ENCODE measurements at regions of chr1 and their contacts with region 1.

Region 1: DNA sequence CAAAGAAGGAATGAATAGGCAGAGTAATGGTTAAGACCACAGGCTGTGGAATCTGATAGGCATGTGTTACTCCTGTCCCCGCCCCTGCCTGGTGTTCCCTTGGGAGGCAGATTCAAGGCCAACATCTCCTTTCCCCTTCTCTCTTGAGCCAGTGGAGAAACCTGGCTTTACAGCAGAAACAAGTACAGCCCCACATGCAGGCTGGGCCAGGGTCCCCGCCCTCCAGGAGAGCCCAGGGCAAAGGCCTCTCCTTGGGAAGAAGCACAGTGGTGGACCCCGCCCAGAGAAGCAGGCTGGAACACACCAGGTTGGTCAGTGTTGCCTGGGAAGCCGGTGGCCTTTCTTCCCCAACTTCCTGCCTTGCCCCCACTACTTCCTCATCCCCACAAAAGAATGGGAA is 6.8 kb downstream of the C1orf167 start:
- DNase-seq: no peak
- ATAC-seq: no peak; the same call in 1 of the 2 replicates
- H3K4me3 ChIP-seq: no peak overlapping the region
- H3K27ac ChIP-seq: no peak overlapping the region
- H3K4me1 ChIP-seq: no peaks in the 10 kb centered on the region
- H3K27me3 ChIP-seq: peaks cover 19% of the 10 kb centered on the region
- CTCF ChIP-seq: no peak
- POLR2A ChIP-seq: no peak
- RAD21 ChIP-seq: no peak

Region 2: GRCh38 chr1:11713095-11713494 is 55.7 kb before region 1 on chr1:
- CTCF ChIA-PET with region 1: interaction called, 11 read pairs
- POLR2A ChIA-PET with region 1: no interaction called
- dilution Hi-C with region 1: no loop called
- in situ Hi-C with region 1: no loop called
- intact Hi-C with region 1: no loop called
- DNase-seq: no peak
- ATAC-seq: no peak
- H3K4me3 ChIP-seq: no peak overlapping the region
- H3K27ac ChIP-seq: no peak overlapping the region
- H3K4me1 ChIP-seq: no peaks in the 10 kb centered on the region
- H3K27me3 ChIP-seq: peaks cover 18% of the 10 kb centered on the region
- CTCF ChIP-seq: no peak
- POLR2A ChIP-seq: no peak
- RAD21 ChIP-seq: no peak

Region 3: GRCh38 chr1:11822096-11822495 is 53.3 kb after region 1 on chr1:
- CTCF ChIA-PET with region 1: no interaction called
- POLR2A ChIA-PET with region 1: no interaction called
- dilution Hi-C with region 1: no loop called
- in situ Hi-C with region 1: no loop called
- intact Hi-C with region 1: no loop called
- DNase-seq: peak; percentile 68
- ATAC-seq: peak; percentile 87
- H3K4me3 ChIP-seq: no peak overlapping the region
- H3K27ac ChIP-seq: peak overlapping the region; percentile 6; the same call in 1 of the 2 replicates
- H3K4me1 ChIP-seq: peaks cover 1% of the 10 kb centered on the region; the same call in 1 of the 2 replicates
- H3K27me3 ChIP-seq: no peaks in the 10 kb centered on the region
- CTCF ChIP-seq: no peak
- POLR2A ChIP-seq: no peak
- RAD21 ChIP-seq: no peak

Measured in IMR-90 (cell line).